WTC11 (cell line): ENCODE measurements at regions of chr9 and their contacts with region 1.

Region 1: GRCh38 chr9:128067876-128068613 is at the start of gene SLC25A25:
- DNase-seq: peak; percentile 100
- ATAC-seq: peak; percentile 86
- H3K4me3 Mint-ChIP-seq: peak within 1 kb of the TSS; percentile 85
- H3K27ac Mint-ChIP-seq: peak within 1 kb of the TSS; percentile 67
- H3K4me1 Mint-ChIP-seq: peaks cover 38% of the 10 kb centered on the region
- H3K27me3 Mint-ChIP-seq: no peaks in the 10 kb centered on the region
- CTCF ChIP-seq: no peak
- total RNA-seq, gene SLC25A25: 15.2 to 17.4 TPM (median 15.2 TPM) in 3 replicates

Region 2: GRCh38 chr9:128055344-128056040 is 12.6 kb before region 1 on chr9:
- CTCF ChIA-PET with region 1: interaction called, 15 read pairs
- POLR2A ChIA-PET with region 1: no interaction called
- DNase-seq: no peak
- ATAC-seq: peak; percentile 23; the same call in 1 of the 2 replicates
- H3K4me3 Mint-ChIP-seq: no peak overlapping the region
- H3K27ac Mint-ChIP-seq: peak overlapping the region; percentile 57
- H3K4me1 Mint-ChIP-seq: peaks cover 31% of the 10 kb centered on the region
- H3K27me3 Mint-ChIP-seq: no peaks in the 10 kb centered on the region
- CTCF ChIP-seq: no peak

Region 3: DNA sequence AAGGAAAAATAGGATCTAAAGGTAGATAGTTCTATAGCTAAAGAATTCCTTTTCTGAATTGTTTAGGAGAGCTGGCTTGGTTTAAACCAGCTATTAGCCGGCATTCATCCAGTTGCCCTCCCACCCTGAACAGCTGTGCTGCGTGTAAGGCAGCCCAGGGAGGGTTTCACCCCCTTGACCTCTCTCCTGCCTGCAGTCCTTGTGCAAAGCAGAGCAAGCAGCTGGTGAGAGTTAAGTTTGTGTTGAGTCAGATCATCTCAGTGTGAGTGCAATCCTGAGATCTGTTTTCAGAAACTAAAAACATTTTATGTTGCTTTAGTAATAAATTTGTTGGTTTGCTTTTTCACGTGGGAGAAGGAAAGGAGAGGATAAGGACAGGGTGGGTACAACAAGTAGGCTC is 13.0 kb after region 1 on chr9:
- CTCF ChIA-PET with region 1: interaction called, 11 read pairs
- POLR2A ChIA-PET with region 1: interaction called, 11 read pairs
- DNase-seq: no peak
- ATAC-seq: no peak
- H3K4me3 Mint-ChIP-seq: no peak overlapping the region
- H3K27ac Mint-ChIP-seq: peak overlapping the region; percentile 89
- H3K4me1 Mint-ChIP-seq: peaks cover 32% of the 10 kb centered on the region
- H3K27me3 Mint-ChIP-seq: no peaks in the 10 kb centered on the region
- CTCF ChIP-seq: no peak